ENCODE measurements at regions of chr17 and their contacts with region 1.

Region 1: DNA sequence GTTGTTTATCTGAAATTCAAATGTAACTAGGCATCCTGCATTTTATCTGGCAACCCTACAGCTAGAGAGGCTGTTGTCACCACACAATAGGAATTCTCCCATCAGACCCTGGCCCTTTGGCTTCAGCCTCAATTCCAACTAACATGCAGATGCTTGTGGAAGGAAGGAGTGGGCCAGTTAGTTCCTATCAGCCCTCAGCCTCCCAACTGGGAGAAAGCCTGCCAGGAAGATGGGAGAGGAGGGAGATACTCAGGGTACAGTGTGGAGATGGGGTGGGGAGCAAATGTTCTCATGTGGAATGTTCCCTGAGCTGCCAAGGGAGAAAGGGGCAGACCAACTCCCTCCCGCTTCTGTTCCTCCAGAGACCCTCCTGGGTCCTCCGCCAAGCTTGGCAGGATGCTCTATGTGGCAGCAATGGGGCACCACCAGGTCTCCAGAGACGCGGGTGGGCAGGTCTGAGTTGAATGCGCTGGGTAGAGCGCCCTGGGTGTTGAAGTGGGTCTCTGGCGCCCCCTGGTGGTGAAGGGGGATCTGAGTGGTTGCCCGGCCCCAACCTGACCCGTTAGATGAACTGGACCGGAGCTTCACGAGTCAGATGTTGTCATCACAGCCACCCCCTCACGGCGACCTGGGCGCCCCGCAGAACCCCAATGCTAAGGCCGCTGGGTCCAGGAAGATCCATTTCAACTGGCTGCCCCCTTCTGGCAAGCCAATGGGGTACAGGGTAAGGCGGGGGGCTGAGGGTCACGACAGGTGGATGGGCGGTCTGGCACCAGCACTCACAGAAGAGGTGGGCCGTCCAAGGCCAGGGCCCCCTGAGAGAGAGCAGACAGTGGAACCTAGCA is 15.2 kb downstream of the GALK1 start:
- DNase-seq: peak; percentile 91
- ATAC-seq: peak; percentile 67
- H3K4me3 Mint-ChIP-seq: no peak overlapping the region
- H3K27ac Mint-ChIP-seq: no peak overlapping the region
- H3K4me1 Mint-ChIP-seq: peaks cover 4% of the 10 kb centered on the region
- H3K27me3 Mint-ChIP-seq: peaks cover 7% of the 10 kb centered on the region
- CTCF ChIP-seq: peak; percentile 98

Region 2: DNA sequence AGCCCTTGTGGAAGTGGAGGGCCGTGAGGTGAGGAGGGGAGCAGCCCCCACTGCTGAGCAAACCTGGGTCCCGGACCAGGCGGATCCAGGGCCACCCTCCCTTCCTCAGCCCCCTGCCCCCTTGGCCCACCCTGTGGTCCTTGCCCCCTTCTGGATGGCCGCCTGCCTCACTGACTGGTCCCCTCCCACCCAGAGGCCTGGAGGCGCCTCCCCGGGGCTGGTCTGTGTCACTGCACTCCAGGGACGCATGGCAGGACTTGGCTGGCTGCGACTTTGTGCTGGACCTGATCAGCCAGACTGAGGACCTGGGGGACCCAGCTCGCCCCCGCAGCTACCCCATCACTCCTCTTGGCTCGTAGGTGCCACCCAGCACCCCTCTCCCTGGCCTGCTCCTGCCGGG is 135.8 kb before region 1 on chr17:
- CTCF ChIA-PET with region 1: interaction called, 57 read pairs
- POLR2A ChIA-PET with region 1: no interaction called
- DNase-seq: peak; percentile 65
- ATAC-seq: peak; percentile 77
- H3K4me3 Mint-ChIP-seq: no peak overlapping the region
- H3K27ac Mint-ChIP-seq: no peak overlapping the region
- H3K4me1 Mint-ChIP-seq: no peaks in the 10 kb centered on the region
- H3K27me3 Mint-ChIP-seq: no peaks in the 10 kb centered on the region
- CTCF ChIP-seq: no peak

Region 3: DNA sequence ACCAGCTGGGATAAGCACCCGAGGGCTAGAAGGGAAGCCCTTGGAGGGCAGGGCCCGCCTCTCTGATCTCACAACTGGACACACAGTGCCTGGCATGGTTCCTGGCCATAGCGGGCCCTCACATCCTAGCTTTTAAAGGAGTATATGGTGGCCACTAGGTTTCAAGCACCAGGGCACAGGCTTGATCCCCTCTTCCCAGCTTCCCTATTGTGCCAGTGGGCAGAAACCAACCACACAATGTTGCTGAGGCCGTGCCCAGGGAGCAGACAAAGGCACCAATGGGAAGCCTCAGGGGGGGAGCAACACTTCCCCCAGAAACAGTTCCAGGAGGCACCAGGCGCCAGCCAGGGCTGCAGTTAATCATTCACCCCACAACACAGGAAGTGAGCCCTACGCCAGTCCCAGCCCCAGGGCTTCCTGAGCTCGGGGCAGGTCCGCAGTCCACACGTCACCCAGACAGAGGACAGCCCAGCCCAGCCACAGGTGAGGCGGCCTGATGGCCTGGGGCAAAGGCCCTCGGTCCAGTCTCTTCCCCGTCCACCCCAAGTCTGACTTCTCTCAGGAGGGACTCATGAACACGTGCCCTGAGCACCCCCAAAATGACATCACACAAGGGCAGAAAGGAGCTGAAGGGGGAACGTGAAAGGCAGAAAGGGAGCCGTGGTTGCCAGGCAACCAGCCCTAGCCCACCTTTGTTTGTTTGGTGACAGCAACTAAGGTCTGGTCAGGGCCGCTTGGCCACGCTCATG is 103.7 kb before region 1 on chr17:
- CTCF ChIA-PET with region 1: interaction called, 66 read pairs
- POLR2A ChIA-PET with region 1: no interaction called
- DNase-seq: no peak
- ATAC-seq: no peak
- H3K4me3 Mint-ChIP-seq: no peak overlapping the region
- H3K27ac Mint-ChIP-seq: peak overlapping the region; percentile 57
- H3K4me1 Mint-ChIP-seq: peaks cover 18% of the 10 kb centered on the region
- H3K27me3 Mint-ChIP-seq: no peaks in the 10 kb centered on the region
- CTCF ChIP-seq: no peak

Region 4: GRCh38 chr17:75693500-75694481 is 56.0 kb before region 1 on chr17:
- CTCF ChIA-PET with region 1: interaction called, 25 read pairs
- POLR2A ChIA-PET with region 1: no interaction called
- DNase-seq: peak; percentile 24
- ATAC-seq: peak; percentile 81
- H3K4me3 Mint-ChIP-seq: no peak overlapping the region
- H3K27ac Mint-ChIP-seq: peak overlapping the region; percentile 53
- H3K4me1 Mint-ChIP-seq: peaks cover 16% of the 10 kb centered on the region
- H3K27me3 Mint-ChIP-seq: no peaks in the 10 kb centered on the region
- CTCF ChIP-seq: no peak

Region 5: DNA sequence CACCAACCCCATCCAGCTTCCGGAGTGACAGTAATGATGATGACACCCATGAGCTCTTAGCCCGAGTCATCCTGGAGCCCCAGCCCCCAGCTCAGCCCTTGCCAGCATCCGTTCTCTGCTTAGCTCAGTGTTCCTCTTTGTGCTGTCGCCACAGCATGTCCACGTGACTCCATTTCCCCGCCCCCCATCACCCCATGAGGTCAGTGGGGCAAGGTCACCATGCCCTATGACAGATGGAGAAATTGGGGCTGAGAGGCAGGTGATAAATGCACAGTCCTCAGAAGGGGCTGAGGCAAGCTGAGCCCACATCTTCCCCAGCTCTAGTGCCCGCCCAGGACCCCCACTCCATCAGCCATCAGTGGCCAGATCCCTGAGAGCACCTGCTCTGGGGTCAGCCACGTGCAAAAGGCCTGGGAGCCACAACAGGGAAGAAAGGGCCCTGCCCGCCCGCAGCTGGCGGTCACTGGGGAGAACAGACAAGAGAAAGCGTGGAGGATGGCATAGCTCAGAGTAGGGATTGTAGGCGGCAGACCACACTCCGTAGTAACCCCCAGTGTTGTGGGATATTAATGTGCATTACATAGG is 11.5 kb before region 1 on chr17:
- CTCF ChIA-PET with region 1: interaction called, 105 read pairs
- POLR2A ChIA-PET with region 1: interaction called, 3 read pairs
- DNase-seq: no peak
- ATAC-seq: no peak
- H3K4me3 Mint-ChIP-seq: no peak overlapping the region
- H3K27ac Mint-ChIP-seq: peak overlapping the region; percentile 60
- H3K4me1 Mint-ChIP-seq: no peaks in the 10 kb centered on the region
- H3K27me3 Mint-ChIP-seq: no peaks in the 10 kb centered on the region
- CTCF ChIP-seq: no peak

Region 6: DNA sequence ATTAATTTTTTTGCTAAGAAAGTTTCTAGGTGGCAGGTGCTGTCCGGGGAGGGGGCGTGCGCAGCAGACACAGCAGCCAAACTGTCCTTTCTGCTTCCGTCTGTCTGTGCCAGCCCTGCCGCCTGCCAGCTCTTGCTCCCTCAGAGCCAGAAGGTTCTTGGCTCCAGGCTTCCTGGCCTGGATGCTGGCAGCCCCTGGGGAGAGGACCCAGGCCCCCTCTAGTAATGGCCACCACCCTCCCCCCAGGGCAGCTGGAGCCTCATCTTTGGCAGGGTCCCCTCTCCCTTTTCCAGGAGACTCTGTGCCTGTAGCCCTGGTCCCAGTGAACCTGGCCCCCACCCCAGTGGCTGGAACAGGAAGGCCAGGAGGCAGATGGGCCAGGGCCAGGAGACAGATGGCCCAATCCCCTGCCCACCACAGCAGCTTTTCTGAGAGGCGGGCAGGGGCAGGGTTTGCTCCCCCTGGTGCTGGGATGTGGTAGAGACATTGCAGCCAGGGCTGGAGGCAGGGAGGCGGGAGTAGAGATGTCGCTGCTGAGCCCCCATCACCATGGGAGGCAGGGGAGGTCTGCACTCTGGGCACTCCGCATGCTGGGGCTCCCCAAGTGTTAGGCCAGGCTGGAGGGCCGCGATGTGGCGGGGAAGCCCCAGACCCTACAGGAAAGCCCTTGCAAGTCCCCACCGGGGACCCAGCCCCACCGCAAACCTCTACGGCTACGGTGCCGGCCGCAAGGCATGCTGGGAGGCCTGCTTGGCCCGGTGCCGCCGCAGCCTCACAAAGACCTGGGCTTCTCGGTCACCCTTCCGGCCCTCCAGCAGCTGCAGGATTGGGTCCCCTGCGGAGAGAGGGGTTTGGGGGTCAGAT is 77.7 kb after region 1 on chr17:
- CTCF ChIA-PET with region 1: interaction called, 21 read pairs
- POLR2A ChIA-PET with region 1: interaction called, 3 read pairs
- DNase-seq: peak; percentile 91
- ATAC-seq: peak; percentile 74
- H3K4me3 Mint-ChIP-seq: peak overlapping the region; percentile 47
- H3K27ac Mint-ChIP-seq: peak overlapping the region; percentile 63; the same call in 1 of the 2 replicates
- H3K4me1 Mint-ChIP-seq: peaks cover 27% of the 10 kb centered on the region
- H3K27me3 Mint-ChIP-seq: no peaks in the 10 kb centered on the region
- CTCF ChIP-seq: peak; percentile 71